Activated B cell treated with CpG ODN at 0.5 μM for 24 hours (primary cell): ENCODE measurements at regions of chr15 and their contacts with region 1.

Region 1: DNA sequence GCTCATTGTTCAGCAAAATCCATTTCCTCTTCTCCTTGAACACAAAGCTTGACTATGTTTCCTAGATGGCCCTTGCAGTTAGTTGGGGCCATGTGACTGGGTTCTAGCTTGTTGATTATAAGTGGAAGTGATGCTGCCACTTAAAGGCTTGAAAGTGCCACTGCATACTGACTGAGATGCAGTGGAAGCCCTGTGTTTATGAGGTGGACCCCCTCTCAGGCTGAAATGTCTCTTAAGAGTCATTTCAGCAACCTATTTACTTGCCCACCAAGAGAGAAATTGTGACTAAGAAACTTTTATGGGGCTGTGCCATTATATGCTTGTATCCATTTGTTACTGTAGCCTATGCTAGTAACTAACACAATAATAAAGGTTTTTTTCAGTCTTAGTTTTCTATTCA is 8.4 kb upstream of the ANP32A start:
- DNase-seq: no peak
- ATAC-seq: peak; percentile 84
- H3K4me3 Mint-ChIP-seq: no peak overlapping the region
- H3K27ac Mint-ChIP-seq: no peak overlapping the region
- H3K4me1 Mint-ChIP-seq: peaks cover 3% of the 10 kb centered on the region
- H3K27me3 Mint-ChIP-seq: peaks cover 4% of the 10 kb centered on the region
- CTCF ChIP-seq: no peak

Region 2: GRCh38 chr15:68700455-68701123 is 128.5 kb before region 1 on chr15:
- CTCF ChIA-PET with region 1: no interaction called
- POLR2A ChIA-PET with region 1: no interaction called
- intact Hi-C with region 1: no loop called
- DNase-seq: no peak
- ATAC-seq: no peak
- H3K4me3 Mint-ChIP-seq: no peak overlapping the region
- H3K27ac Mint-ChIP-seq: no peak overlapping the region
- H3K4me1 Mint-ChIP-seq: no peaks in the 10 kb centered on the region
- H3K27me3 Mint-ChIP-seq: peaks cover 2% of the 10 kb centered on the region
- CTCF ChIP-seq: no peak

Region 3: GRCh38 chr15:68795298-68795848 is 33.7 kb before region 1 on chr15:
- CTCF ChIA-PET with region 1: interaction called, 12 read pairs
- POLR2A ChIA-PET with region 1: interaction called, 4 read pairs
- intact Hi-C with region 1: loop called (anchors 2 kb)
- DNase-seq: peak; percentile 55
- ATAC-seq: peak; percentile 62
- H3K4me3 Mint-ChIP-seq: peak overlapping the region; percentile 75
- H3K27ac Mint-ChIP-seq: peak overlapping the region; percentile 85
- H3K4me1 Mint-ChIP-seq: peaks cover 97% of the 10 kb centered on the region
- H3K27me3 Mint-ChIP-seq: no peaks in the 10 kb centered on the region
- CTCF ChIP-seq: no peak

Region 4: GRCh38 chr15:69181424-69181823 is 352.4 kb after region 1 on chr15:
- CTCF ChIA-PET with region 1: no interaction called
- POLR2A ChIA-PET with region 1: no interaction called
- intact Hi-C with region 1: no loop called
- DNase-seq: no peak
- ATAC-seq: no peak
- H3K4me3 Mint-ChIP-seq: no peak overlapping the region
- H3K27ac Mint-ChIP-seq: no peak overlapping the region
- H3K4me1 Mint-ChIP-seq: peaks cover 13% of the 10 kb centered on the region
- H3K27me3 Mint-ChIP-seq: no peaks in the 10 kb centered on the region
- CTCF ChIP-seq: no peak